IMR-90 (cell line): ENCODE measurements at regions of chr21 and their contacts with region 1.

Region 1: GRCh38 chr21:36518883-36519492 is 39.1 kb upstream of the CLDN14 start:
- DNase-seq: no peak
- ATAC-seq: no peak
- H3K4me3 ChIP-seq: no peak overlapping the region
- H3K27ac ChIP-seq: no peak overlapping the region
- H3K4me1 ChIP-seq: no peaks in the 10 kb centered on the region
- H3K27me3 ChIP-seq: peaks cover 47% of the 10 kb centered on the region
- CTCF ChIP-seq: no peak
- POLR2A ChIP-seq: no peak
- RAD21 ChIP-seq: no peak

Region 2: DNA sequence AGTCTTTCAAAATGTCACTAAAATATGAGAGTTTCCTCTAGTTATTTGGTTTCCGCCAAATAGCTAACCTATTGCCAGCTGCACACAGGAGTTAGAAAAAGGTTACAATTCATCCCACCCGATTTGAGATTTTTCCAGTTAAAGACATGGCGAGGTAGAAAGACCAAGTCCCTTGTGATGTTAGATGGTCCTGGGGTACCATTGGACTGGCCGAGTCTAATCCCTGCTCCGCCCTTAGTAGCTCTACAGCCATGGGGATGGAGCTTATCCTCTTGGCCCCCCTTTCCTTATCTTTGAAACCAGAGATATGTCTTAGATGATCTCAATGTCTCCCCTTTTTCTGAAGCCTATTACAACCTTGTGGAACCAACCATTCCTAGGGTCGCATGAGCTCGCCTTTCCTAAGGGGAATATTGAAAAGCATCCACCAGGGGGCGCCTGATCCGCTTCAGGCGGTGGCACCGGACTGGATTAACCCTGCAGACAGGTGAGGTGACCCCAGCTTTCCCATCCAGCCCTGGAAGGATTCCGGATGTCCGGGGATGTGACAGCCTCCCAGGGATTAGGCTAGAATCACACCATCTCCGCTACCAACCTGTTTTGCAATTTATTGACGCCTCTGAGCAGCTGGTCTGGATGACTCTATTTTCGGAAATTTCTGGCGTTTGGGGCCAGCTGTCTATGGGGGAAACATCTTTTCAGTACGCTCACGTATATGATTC is 111.7 kb after region 1 on chr21:
- CTCF ChIA-PET with region 1: interaction called, 10 read pairs
- POLR2A ChIA-PET with region 1: no interaction called
- dilution Hi-C with region 1: no loop called
- in situ Hi-C with region 1: no loop called
- intact Hi-C with region 1: no loop called
- DNase-seq: peak; percentile 22
- ATAC-seq: no peak
- H3K4me3 ChIP-seq: no peak overlapping the region
- H3K27ac ChIP-seq: no peak overlapping the region
- H3K4me1 ChIP-seq: no peaks in the 10 kb centered on the region; the same call in 1 of the 2 replicates
- H3K27me3 ChIP-seq: peaks cover 24% of the 10 kb centered on the region
- CTCF ChIP-seq: peak; percentile 56
- POLR2A ChIP-seq: no peak
- RAD21 ChIP-seq: peak; percentile 60